ENCODE measurements at regions of chr15 and their contacts with region 1.

Region 1: DNA sequence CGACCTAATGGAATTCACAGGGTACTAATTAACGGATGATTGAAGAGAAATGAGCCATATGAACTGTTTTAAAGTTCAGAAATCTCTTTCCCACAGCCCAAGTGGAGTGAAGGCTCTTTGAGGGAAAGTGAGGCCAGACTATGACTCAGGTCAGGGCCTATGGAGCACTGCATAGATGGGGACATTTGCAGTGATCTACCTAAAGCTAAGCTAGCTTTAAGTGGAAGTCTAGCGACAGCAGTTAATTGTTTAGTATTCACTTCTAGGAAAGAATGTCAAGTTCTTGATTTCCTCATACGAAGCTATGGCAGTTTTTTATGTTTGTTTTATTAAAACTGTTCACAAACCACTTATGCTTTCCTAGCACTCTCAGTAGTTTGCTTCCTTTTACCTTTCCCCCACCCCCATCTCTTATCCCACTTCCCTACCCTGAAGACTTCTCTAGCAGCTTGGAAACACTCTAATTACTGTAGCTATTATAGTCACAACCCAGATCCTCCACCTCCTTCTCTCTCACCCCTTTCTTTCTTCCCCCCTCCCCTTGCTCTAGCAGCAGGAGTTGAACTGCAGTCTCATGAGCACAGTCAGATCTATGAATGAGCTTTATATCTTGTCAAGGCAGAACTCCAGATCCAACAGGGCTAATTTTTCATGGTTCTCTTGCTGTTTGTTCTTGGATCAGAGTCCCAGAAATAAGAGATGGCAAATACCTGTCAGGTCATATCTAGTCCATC is 6.2 kb downstream of the ZNF609 start:
- DNase-seq: no peak
- ATAC-seq: no peak
- H3K4me3 ChIP-seq: no peak overlapping the region
- H3K27ac ChIP-seq: no peak overlapping the region
- H3K4me1 ChIP-seq: peaks cover 9 to 63% (median 42%) of the 10 kb centered on the region in 12 donors
- H3K27me3 ChIP-seq: no peaks in the 10 kb centered on the region
- CTCF ChIP-seq: no peak
- POLR2A ChIP-seq: no peak

Region 2: GRCh38 chr15:64333986-64334929 is 132.3 kb before region 1 on chr15:
- intact Hi-C with region 1: no loop called
- DNase-seq: no peak
- ATAC-seq: no peak
- H3K4me3 ChIP-seq: no peak overlapping the region
- H3K27ac ChIP-seq: no peak overlapping the region
- H3K4me1 ChIP-seq: peaks cover 0 to 14% (median 0%) of the 10 kb centered on the region in 12 donors
- H3K27me3 ChIP-seq: no peaks in the 10 kb centered on the region
- CTCF ChIP-seq: no peak
- POLR2A ChIP-seq: no peak

Region 3: GRCh38 chr15:64507293-64507802 is 40.8 kb after region 1 on chr15:
- intact Hi-C with region 1: loop called in 2 of 10 experiments (anchors 5 kb)
- DNase-seq: peak; percentile 68 to 83 (median 75)
- ATAC-seq: peak; percentile 89 to 100 (median 96)
- H3K4me3 ChIP-seq: no peak overlapping the region
- H3K27ac ChIP-seq: peak overlapping the region in 10 of 12 donors; percentile 15 to 64 (median 31)
- H3K4me1 ChIP-seq: peaks cover 2 to 56% (median 35%) of the 10 kb centered on the region in 12 donors
- H3K27me3 ChIP-seq: no peaks in the 10 kb centered on the region
- CTCF ChIP-seq: no peak
- POLR2A ChIP-seq: no peak